AG04449 (cell line): ENCODE measurements at regions of chr1 and their contacts with region 1.

Region 1: GRCh38 chr1:156910309-156910782 is 10.1 kb upstream of the LRRC71 start:
- DNase-seq: no peak
- H3K4me3 ChIP-seq: no peak overlapping the region
- CTCF ChIP-seq: peak; percentile 84

Region 2: DNA sequence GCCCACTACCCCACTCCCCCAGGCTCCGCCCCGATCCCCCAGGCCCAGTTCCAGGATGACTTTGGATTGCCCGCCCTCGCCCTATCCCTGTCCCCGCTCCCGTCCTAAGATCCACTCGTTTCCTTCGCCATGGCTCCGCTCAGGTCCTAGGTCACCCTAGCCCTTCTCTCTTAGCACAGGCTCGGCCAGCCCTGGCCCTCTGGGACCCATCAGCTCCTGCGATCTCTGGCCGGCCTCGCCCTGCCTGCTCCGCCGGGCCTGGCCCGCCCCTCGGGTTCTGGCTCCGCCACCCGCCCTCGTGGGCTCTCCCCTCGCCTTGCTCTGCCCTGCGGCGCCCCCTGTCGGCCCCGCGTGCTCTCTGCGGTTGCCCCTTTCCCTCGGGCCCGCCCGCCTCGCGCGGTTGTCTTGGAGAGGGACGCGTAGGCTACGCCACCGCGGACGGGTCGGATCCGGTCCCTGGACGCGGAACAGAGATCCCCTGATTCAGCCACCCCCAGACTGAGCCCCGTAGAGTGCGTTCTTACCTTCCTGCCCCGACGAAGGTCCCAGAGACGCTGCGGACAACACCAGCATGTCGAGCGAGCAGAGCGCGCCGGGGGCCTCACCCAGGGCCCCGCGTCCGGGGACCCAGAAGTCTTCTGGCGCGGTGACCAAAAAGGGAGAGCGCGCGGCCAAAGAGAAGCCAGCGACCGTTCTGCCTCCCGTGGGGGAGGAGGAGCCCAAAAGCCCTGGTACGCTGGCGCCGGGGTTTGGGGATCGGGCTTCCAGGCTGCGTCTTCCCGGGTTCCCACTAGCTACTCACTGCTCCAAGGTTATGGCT is 10.1 kb after region 1 on chr1 and contains the start of gene LRRC71:
- CTCF ChIA-PET with region 1: interaction called, 97 read pairs
- POLR2A ChIA-PET with region 1: no interaction called
- DNase-seq: no peak
- H3K4me3 ChIP-seq: peak within 1 kb of the TSS; percentile 30; the same call in 1 of the 2 replicates
- CTCF ChIP-seq: peak; percentile 98

Region 3: GRCh38 chr1:156927215-156928042 is 17.1 kb after region 1 on chr1:
- CTCF ChIA-PET with region 1: interaction called, 97 read pairs
- POLR2A ChIA-PET with region 1: no interaction called
- DNase-seq: no peak
- H3K4me3 ChIP-seq: peak overlapping the region; percentile 55
- CTCF ChIP-seq: peak; percentile 94

Region 4: DNA sequence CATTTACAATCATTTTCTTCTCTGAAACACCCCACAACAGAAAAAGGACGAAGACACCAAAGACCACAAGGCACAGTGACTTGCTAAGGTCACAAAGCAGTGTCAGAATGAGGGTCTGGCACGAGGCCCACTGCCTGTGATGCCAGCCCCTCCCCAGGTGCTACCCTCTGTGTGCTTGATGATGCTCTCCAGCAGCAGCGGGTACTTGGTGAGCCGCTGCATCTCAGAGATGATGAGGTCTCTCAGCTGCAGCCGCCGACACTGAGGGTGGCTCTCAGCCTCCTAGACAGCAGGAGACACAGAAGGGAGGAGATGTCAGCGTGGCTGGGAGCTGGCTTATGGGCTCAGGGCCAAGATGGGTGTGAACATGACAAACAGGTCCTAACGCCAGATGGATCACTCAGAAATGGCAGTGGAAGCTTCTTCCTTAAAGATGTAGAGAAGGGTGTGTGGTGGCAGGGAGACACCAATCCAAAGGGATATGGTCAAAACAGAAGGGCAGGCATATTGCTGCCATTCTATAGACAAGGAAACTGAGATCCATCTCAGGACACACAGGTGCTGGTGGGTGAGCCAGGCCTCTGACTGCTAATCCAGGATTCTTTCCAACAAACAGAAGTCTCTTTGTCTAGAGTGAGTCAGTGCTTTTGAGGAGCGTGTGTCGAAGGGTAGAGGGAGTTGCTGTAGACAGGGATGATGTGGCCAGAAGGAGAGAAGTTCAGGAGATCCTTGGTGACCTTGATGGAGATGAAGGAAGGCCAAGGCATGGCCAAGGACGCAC is 35.7 kb after region 1 on chr1:
- CTCF ChIA-PET with region 1: no interaction called
- POLR2A ChIA-PET with region 1: no interaction called
- DNase-seq: no peak
- H3K4me3 ChIP-seq: no peak overlapping the region
- CTCF ChIP-seq: no peak